IMR-90 (cell line): ENCODE measurements at regions of chr13 and their contacts with region 1.

Region 1: GRCh38 chr13:50529154-50529882 is 314.2 kb downstream of the DLEU7 start:
- DNase-seq: peak; percentile 89
- ATAC-seq: peak; percentile 92
- H3K4me3 ChIP-seq: peak overlapping the region; percentile 5; the same call in 1 of the 2 replicates
- H3K27ac ChIP-seq: peak overlapping the region; percentile 83
- H3K4me1 ChIP-seq: peaks cover 18% of the 10 kb centered on the region
- H3K27me3 ChIP-seq: no peaks in the 10 kb centered on the region
- CTCF ChIP-seq: no peak
- POLR2A ChIP-seq: 0 out of 2 replicates have a peak, but pooled peaks have one; percentile 25
- RAD21 ChIP-seq: no peak

Region 2: GRCh38 chr13:49669735-49670309 is 859.5 kb before region 1 on chr13:
- CTCF ChIA-PET with region 1: no interaction called
- POLR2A ChIA-PET with region 1: no interaction called
- dilution Hi-C with region 1: no loop called
- in situ Hi-C with region 1: loop called (anchors 10 kb)
- intact Hi-C with region 1: loop called (anchors 2 kb)
- DNase-seq: peak; percentile 81
- ATAC-seq: peak; percentile 98
- H3K4me3 ChIP-seq: no peak overlapping the region
- H3K27ac ChIP-seq: no peak overlapping the region
- H3K4me1 ChIP-seq: peaks cover 5% of the 10 kb centered on the region
- H3K27me3 ChIP-seq: no peaks in the 10 kb centered on the region
- CTCF ChIP-seq: peak; percentile 94
- POLR2A ChIP-seq: peak; percentile 61; the same call in 1 of the 2 replicates
- RAD21 ChIP-seq: peak; percentile 98

Region 3: DNA sequence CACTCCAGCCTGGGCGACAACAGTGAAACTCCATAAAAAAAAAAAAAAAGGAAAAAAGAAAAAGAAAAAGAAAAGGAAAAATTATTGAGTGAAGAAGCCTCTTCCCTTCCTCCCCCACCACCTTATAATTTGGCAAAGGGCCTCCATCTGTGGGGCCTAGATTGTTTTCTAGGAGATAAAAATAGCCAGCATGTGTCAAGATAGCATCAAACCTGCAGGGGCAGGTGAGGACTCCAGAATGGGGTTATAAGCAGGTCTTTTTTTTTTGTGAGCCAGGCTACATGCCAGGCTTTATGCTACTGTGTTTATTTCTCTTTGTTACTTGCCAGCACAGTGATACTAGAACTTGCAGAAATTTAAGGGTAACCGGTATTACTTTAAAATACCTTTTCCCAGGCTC is 544.2 kb before region 1 on chr13:
- CTCF ChIA-PET with region 1: no interaction called
- POLR2A ChIA-PET with region 1: no interaction called
- dilution Hi-C with region 1: no loop called
- in situ Hi-C with region 1: loop called (anchors 10 kb)
- intact Hi-C with region 1: no loop called
- DNase-seq: no peak
- ATAC-seq: no peak
- H3K4me3 ChIP-seq: no peak overlapping the region
- H3K27ac ChIP-seq: no peak overlapping the region
- H3K4me1 ChIP-seq: no peaks in the 10 kb centered on the region
- H3K27me3 ChIP-seq: no peaks in the 10 kb centered on the region
- CTCF ChIP-seq: no peak
- POLR2A ChIP-seq: no peak
- RAD21 ChIP-seq: no peak

Region 4: GRCh38 chr13:50123862-50124536 is 405.3 kb before region 1 on chr13:
- CTCF ChIA-PET with region 1: no interaction called
- POLR2A ChIA-PET with region 1: interaction called, 9 read pairs
- dilution Hi-C with region 1: no loop called
- in situ Hi-C with region 1: no loop called
- intact Hi-C with region 1: loop called (anchors 1 kb)
- DNase-seq: peak; percentile 97
- ATAC-seq: peak; percentile 72
- H3K4me3 ChIP-seq: peak overlapping the region; percentile 76
- H3K27ac ChIP-seq: peak overlapping the region; percentile 95
- H3K4me1 ChIP-seq: peaks cover 7% of the 10 kb centered on the region
- H3K27me3 ChIP-seq: no peaks in the 10 kb centered on the region
- CTCF ChIP-seq: 0 out of 2 replicates have a peak, but pooled peaks have one; percentile 13
- POLR2A ChIP-seq: peak; percentile 94
- RAD21 ChIP-seq: no peak; the same call in 1 of the 2 replicates

Region 5: GRCh38 chr13:50421473-50422130 is 107.7 kb before region 1 on chr13:
- CTCF ChIA-PET with region 1: no interaction called
- POLR2A ChIA-PET with region 1: interaction called, 3 read pairs
- dilution Hi-C with region 1: no loop called
- in situ Hi-C with region 1: no loop called
- intact Hi-C with region 1: loop called (anchors 5 kb)
- DNase-seq: peak; percentile 38
- ATAC-seq: peak; percentile 46; the same call in 1 of the 2 replicates
- H3K4me3 ChIP-seq: no peak overlapping the region
- H3K27ac ChIP-seq: no peak overlapping the region
- H3K4me1 ChIP-seq: peaks cover 9% of the 10 kb centered on the region
- H3K27me3 ChIP-seq: no peaks in the 10 kb centered on the region
- CTCF ChIP-seq: no peak
- POLR2A ChIP-seq: no peak
- RAD21 ChIP-seq: no peak